ENCODE measurements at regions of chr14 and their contacts with region 1.

Region 1: GRCh38 chr14:100654814-100655740 is 67.9 kb upstream of the BEGAIN start:
- DNase-seq: peak; percentile 51
- H3K4me3 Mint-ChIP-seq: no peak overlapping the region
- H3K27ac Mint-ChIP-seq: no peak overlapping the region
- H3K4me1 Mint-ChIP-seq: peaks cover 3% of the 10 kb centered on the region
- H3K27me3 Mint-ChIP-seq: peaks cover 14% of the 10 kb centered on the region

Region 2: DNA sequence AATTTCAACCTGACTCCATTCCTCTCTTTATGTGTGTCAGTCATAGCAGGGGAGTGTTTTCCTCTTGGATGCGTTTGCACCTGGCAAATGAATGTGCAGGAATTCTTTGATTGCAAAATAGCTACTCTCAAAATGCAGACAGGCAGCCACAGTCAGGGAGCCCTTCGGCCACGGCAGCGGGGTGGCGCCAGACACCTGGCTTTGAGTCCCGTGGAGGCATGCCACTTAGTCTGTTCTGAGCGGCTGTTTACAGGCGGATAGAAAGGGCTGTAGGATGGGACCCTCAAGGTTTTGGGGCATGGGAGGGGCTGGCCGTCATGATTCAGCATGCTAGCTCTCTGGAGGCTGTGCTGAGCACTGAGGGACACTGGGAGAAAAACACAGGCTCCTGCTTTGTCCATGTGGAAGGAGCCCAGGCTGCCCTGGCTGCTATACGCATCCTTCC is 214.9 kb before region 1 on chr14:
- CTCF ChIA-PET with region 1: interaction called, 21 read pairs
- POLR2A ChIA-PET with region 1: interaction called, 3 read pairs
- DNase-seq: peak; percentile 38
- H3K4me3 Mint-ChIP-seq: no peak overlapping the region
- H3K27ac Mint-ChIP-seq: no peak overlapping the region
- H3K4me1 Mint-ChIP-seq: peaks cover 26% of the 10 kb centered on the region
- H3K27me3 Mint-ChIP-seq: no peaks in the 10 kb centered on the region

Region 3: DNA sequence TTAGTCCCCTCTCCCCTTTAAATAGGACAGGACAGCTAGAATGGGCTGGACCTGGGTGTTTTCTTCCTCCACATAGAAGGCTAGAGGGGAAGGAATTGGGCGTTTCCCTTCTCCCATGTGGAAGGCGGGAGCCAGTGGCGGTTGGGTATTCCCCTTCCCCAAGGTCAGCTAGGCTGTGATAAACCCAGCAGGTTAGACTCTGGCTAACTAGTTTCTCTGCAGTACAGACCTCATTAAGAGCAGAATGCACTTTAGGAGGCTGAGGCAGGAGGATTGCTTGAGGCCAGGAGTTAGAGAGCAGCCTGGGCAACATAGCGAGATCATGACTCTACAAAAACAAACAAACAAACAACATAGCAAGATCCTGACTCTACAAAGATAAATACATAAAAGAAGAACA is 160.4 kb before region 1 on chr14:
- CTCF ChIA-PET with region 1: no interaction called
- POLR2A ChIA-PET with region 1: no interaction called
- DNase-seq: no peak
- H3K4me3 Mint-ChIP-seq: no peak overlapping the region
- H3K27ac Mint-ChIP-seq: no peak overlapping the region
- H3K4me1 Mint-ChIP-seq: peaks cover 5% of the 10 kb centered on the region
- H3K27me3 Mint-ChIP-seq: peaks cover 1% of the 10 kb centered on the region

Region 4: GRCh38 chr14:100546051-100546443 is 109.0 kb before region 1 on chr14:
- CTCF ChIA-PET with region 1: interaction called, 10 read pairs
- POLR2A ChIA-PET with region 1: no interaction called
- DNase-seq: no peak
- H3K4me3 Mint-ChIP-seq: no peak overlapping the region
- H3K27ac Mint-ChIP-seq: peak overlapping the region; percentile 31
- H3K4me1 Mint-ChIP-seq: peaks cover 38% of the 10 kb centered on the region
- H3K27me3 Mint-ChIP-seq: no peaks in the 10 kb centered on the region

Region 5: DNA sequence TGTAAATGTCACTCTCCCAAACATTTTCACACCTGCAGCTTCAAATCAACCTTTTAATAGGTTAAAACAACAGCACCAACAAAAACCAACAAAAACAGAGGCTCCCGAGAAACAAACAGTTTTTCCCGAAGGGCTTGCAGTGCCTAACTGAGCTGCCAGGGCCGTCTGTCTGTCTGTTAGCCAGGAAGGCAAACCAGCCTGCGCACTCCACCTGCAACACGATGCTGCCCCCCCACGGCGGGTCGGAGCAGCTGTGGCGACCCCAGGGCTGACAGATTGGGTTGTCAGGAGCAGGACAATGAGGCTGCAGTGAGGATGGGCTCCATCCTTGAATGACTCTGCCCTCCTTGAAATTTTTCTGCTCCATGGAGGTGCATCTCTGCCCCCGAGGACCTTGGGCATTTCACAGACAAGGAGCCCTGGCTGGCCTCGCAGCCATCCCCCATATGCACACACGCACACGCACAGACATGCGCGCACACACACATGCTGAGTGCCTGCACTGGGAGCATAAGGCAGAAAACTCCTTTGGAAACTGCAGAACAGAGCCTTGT is 245.8 kb after region 1 on chr14:
- CTCF ChIA-PET with region 1: no interaction called
- POLR2A ChIA-PET with region 1: no interaction called
- DNase-seq: peak; percentile 15
- H3K4me3 Mint-ChIP-seq: no peak overlapping the region
- H3K27ac Mint-ChIP-seq: no peak overlapping the region
- H3K4me1 Mint-ChIP-seq: no peaks in the 10 kb centered on the region
- H3K27me3 Mint-ChIP-seq: peaks cover 41% of the 10 kb centered on the region